ENCODE measurements at regions of chr9 and their contacts with region 1.

Region 1: DNA sequence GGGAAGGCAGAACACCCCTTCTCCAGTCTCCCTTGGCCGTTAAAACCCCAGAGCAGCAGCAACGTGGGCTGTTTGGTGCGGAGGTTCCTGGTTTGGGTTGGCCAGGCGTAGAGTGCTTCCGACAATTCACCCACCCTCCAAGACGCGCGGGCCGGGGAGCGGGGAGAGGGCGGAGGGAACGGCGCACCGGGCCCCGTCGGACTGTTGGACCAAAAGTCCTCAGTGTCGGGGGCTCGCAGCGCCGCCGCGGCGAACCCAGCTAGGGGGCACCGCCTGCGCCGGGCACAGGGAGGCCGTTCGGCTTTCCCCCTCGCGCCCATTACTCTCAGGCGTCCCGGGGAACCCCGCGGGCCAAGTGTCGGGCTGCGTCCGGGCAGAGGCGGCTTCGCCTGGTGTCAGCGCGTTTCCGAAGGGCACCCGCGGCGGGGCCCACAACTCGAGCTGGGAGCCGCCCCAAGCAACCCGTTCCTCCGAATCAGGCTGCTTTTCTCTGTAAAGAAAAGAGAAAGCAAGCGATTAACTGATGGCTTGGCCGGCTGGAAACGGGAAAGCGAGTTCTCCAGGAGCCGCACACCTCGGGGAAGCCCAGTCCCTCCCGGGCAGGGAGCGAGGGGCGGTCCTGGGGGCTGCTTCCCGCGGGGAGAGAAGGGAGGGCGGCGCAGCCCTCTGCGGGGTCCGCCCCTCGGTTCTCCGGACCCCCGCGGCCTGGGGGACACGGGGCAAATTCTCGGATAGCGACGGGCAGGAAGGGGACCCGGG is 145.5 kb downstream of the ERCC6L2 start:
- DNase-seq: peak in 7 of 9 experiments; percentile 39 to 72 (median 61)
- ATAC-seq: peak; percentile 43
- H3K4me3 ChIP-seq: peak overlapping the region; percentile 61 to 69
- H3K4me3 Mint-ChIP-seq: peak overlapping the region; percentile 90
- H3K27ac ChIP-seq: peak overlapping the region; percentile 74 to 80
- H3K27ac Mint-ChIP-seq: peak overlapping the region; percentile 89
- H3K4me1 ChIP-seq: peaks cover 54% of the 10 kb centered on the region
- H3K4me1 Mint-ChIP-seq: peaks cover 74% of the 10 kb centered on the region
- H3K27me3 ChIP-seq: no peaks in the 10 kb centered on the region
- H3K27me3 Mint-ChIP-seq: no peaks in the 10 kb centered on the region
- CTCF ChIP-seq: no peak

Region 2: DNA sequence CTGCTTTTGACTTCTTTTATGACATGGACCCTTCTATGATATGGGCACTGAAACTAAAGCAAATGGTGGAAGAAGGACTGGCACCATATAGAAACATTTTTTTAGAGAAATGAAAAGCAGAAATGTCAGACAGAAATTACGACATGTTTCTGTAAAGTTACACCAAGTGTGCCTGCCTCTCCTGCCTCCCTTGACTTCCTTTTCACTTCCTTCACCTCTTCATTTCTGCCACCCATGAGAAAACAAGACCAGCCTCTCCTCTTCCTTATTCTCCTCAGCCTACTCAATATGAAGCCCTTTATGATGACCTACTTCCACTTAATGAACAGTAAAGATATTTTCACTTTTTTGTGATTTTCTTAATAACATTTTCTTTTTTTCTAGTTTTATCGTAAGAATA is 101.0 kb before region 1 on chr9:
- CTCF ChIA-PET with region 1: no interaction called
- POLR2A ChIA-PET with region 1: no interaction called
- intact Hi-C with region 1: no loop called
- DNase-seq: no peak
- ATAC-seq: no peak
- H3K4me3 ChIP-seq: no peak overlapping the region
- H3K4me3 Mint-ChIP-seq: no peak overlapping the region
- H3K27ac ChIP-seq: no peak overlapping the region
- H3K27ac Mint-ChIP-seq: no peak overlapping the region
- H3K4me1 ChIP-seq: no peaks in the 10 kb centered on the region
- H3K4me1 Mint-ChIP-seq: peaks cover 10% of the 10 kb centered on the region
- H3K27me3 ChIP-seq: no peaks in the 10 kb centered on the region
- H3K27me3 Mint-ChIP-seq: no peaks in the 10 kb centered on the region
- CTCF ChIP-seq: no peak

Region 3: GRCh38 chr9:95989297-95989696 is 31.7 kb before region 1 on chr9:
- CTCF ChIA-PET with region 1: no interaction called
- POLR2A ChIA-PET with region 1: no interaction called
- intact Hi-C with region 1: no loop called
- DNase-seq: no peak
- ATAC-seq: no peak
- H3K4me3 ChIP-seq: no peak overlapping the region
- H3K4me3 Mint-ChIP-seq: no peak overlapping the region
- H3K27ac ChIP-seq: no peak overlapping the region
- H3K27ac Mint-ChIP-seq: no peak overlapping the region
- H3K4me1 ChIP-seq: no peaks in the 10 kb centered on the region
- H3K4me1 Mint-ChIP-seq: no peaks in the 10 kb centered on the region
- H3K27me3 ChIP-seq: no peaks in the 10 kb centered on the region
- H3K27me3 Mint-ChIP-seq: no peaks in the 10 kb centered on the region
- CTCF ChIP-seq: no peak

Region 4: DNA sequence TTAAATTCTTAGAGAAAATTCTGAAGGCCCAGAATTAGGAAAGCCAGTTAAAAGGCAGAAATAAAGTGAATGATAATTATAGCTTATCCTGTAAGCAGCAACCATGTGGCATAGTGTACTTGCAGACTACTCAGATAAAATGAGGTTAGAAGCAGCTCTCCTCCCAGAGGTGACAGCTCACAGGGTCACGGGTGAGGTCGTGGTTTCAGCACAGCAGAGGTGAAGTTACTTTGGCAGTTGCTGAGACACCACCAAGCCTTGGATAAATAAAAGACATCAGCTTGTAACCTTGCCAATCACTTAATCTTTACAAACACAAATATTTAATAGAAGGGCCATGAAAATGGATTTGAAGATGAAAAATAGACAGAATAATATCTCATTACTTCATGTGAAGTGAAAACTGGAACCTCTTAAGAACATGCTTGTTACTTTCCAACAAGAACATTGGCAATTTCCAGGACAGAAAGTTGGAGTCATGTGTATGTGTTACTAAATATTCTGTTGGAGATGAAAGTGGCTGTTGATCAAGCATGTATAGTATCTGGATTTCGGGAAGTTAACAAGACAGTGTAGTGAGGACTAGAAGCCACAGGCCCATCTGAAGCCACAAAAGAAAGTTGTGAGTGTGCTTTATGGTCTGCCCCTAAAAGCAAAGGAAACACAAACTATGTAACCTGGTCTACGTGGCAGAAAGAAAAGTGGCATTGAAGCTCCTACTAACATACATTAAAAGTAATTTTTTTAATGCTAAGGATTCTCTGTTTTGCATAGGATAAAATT is 11.1 kb before region 1 on chr9:
- CTCF ChIA-PET with region 1: interaction called, 4 read pairs
- POLR2A ChIA-PET with region 1: interaction called, 3 read pairs
- intact Hi-C with region 1: loop called in 1 of 2 experiments (anchors 2 kb)
- DNase-seq: peak; percentile 54 to 85 (median 65)
- ATAC-seq: peak; percentile 75
- H3K4me3 ChIP-seq: no peak overlapping the region
- H3K4me3 Mint-ChIP-seq: peak overlapping the region; percentile 42
- H3K27ac ChIP-seq: peak overlapping the region; percentile 75 to 83
- H3K27ac Mint-ChIP-seq: no peak overlapping the region
- H3K4me1 ChIP-seq: peaks cover 72% of the 10 kb centered on the region
- H3K4me1 Mint-ChIP-seq: peaks cover 13% of the 10 kb centered on the region
- H3K27me3 ChIP-seq: no peaks in the 10 kb centered on the region
- H3K27me3 Mint-ChIP-seq: no peaks in the 10 kb centered on the region
- CTCF ChIP-seq: no peak

Region 5: DNA sequence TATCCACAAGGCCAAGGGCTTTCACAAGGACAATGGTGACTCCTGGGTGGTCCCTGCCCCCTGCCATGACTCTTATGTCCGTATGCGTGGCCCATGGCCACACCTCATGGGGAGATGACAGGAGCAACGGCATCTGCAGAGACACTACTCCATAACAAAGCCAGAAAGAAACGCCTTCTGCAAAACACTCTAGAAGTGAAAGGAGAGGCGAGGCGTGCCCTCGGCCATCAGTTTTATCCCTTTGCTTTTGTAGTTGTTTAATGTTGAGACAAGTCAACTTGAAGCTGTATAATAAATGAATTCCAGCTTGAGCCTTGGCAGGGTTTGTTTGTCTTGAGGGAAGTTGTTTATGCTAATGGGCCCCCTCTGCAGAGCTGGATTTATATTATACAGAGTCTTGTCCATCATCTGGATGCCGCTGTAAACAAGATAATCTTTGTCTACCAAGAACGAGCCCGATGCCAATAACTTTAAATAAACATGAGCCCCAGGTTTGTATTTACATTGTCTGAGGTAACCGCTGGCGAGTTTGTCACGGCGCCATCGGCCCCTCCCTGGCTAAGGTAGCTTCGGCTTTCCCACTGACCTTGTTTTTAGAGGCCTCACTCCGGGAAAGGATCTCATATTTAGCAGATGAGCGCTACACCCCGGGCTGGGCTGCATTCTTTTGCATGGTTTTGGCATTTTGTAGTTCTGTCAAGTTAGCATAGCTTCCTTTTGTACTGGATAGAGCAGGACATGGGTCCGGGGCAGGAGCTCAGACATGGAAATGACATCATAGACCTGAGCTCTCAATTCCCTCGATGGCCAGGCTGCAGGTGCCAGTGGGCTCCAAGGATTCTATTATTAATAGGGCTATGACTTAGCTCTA is 19.9 kb after region 1 on chr9:
- CTCF ChIA-PET with region 1: no interaction called
- POLR2A ChIA-PET with region 1: no interaction called
- intact Hi-C with region 1: no loop called
- DNase-seq: no peak
- ATAC-seq: no peak
- H3K4me3 ChIP-seq: no peak overlapping the region
- H3K4me3 Mint-ChIP-seq: no peak overlapping the region
- H3K27ac ChIP-seq: no peak overlapping the region
- H3K27ac Mint-ChIP-seq: no peak overlapping the region
- H3K4me1 ChIP-seq: peaks cover 4% of the 10 kb centered on the region
- H3K4me1 Mint-ChIP-seq: peaks cover 15% of the 10 kb centered on the region
- H3K27me3 ChIP-seq: no peaks in the 10 kb centered on the region
- H3K27me3 Mint-ChIP-seq: no peaks in the 10 kb centered on the region
- CTCF ChIP-seq: no peak